Activated CD4-positive, alpha-beta memory T cell treated with anti-CD3 and anti-CD28 coated beads, Interleukin-2, amount 10 ng/mL, durations not matched to agents 7 days and 5 days (primary cell): ENCODE measurements at regions of chr9 and their contacts with region 1.

Region 1: DNA sequence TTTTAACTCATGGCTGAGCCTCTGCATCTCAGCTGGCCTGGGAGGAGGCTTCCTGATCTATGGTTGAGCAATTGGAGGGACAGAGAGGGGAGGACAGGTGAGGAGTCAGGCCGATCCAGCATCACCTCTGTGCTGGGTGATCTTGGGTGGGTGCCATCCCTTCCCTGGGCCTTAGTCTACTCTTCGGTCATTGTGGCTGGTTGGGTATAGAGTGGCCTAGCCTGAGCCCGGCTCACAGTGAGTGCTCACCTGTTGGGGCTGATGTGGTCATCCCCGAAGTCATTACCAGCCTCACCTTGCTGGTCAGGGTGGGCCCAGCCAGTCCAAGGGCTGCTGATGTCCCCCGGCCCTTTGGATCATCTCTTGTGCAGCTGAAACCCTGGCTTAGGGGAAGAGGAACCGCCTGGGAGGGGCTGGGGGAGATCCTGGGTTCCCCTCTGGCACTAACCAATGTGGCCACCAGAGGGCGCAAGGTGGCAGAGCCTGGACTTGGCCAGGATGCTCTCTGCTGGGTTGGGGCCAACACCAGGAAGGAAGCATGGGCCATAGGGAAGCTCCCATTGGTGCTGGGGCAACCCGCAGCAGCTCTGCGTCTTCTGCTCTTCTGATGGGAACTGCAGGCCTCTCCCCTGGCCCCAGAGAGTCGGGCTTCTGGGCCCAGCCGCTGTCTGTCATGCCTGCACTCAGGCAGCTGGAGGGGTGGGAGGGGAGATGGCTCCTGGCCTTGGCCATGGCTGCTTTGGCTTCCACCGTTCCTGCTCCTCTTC is 17.3 kb upstream of the ODF2 start:
- DNase-seq: peak; percentile 85
- H3K4me3 Mint-ChIP-seq: no peak overlapping the region
- H3K27ac Mint-ChIP-seq: no peak overlapping the region
- H3K4me1 Mint-ChIP-seq: peaks cover 11% of the 10 kb centered on the region
- H3K27me3 Mint-ChIP-seq: no peaks in the 10 kb centered on the region

Region 2: GRCh38 chr9:128218518-128219389 is 219.8 kb before region 1 on chr9:
- CTCF ChIA-PET with region 1: no interaction called
- POLR2A ChIA-PET with region 1: no interaction called
- DNase-seq: peak; percentile 97
- H3K4me3 Mint-ChIP-seq: peak overlapping the region; percentile 74
- H3K27ac Mint-ChIP-seq: peak overlapping the region; percentile 51
- H3K4me1 Mint-ChIP-seq: peaks cover 12% of the 10 kb centered on the region
- H3K27me3 Mint-ChIP-seq: peaks cover 11% of the 10 kb centered on the region

Region 3: GRCh38 chr9:128420060-128420650 is 18.4 kb before region 1 on chr9:
- CTCF ChIA-PET with region 1: interaction called, 11 read pairs
- POLR2A ChIA-PET with region 1: interaction called, 3 read pairs
- DNase-seq: peak; percentile 71
- H3K4me3 Mint-ChIP-seq: peak overlapping the region; percentile 59
- H3K27ac Mint-ChIP-seq: no peak overlapping the region
- H3K4me1 Mint-ChIP-seq: peaks cover 23% of the 10 kb centered on the region
- H3K27me3 Mint-ChIP-seq: peaks cover 40% of the 10 kb centered on the region

Region 4: GRCh38 chr9:128448746-128449145 is 10.2 kb after region 1 on chr9:
- CTCF ChIA-PET with region 1: interaction called, 10 read pairs
- POLR2A ChIA-PET with region 1: interaction called, 3 read pairs
- DNase-seq: no peak
- H3K4me3 Mint-ChIP-seq: no peak overlapping the region
- H3K27ac Mint-ChIP-seq: no peak overlapping the region
- H3K4me1 Mint-ChIP-seq: no peaks in the 10 kb centered on the region
- H3K27me3 Mint-ChIP-seq: peaks cover 7% of the 10 kb centered on the region

Region 5: DNA sequence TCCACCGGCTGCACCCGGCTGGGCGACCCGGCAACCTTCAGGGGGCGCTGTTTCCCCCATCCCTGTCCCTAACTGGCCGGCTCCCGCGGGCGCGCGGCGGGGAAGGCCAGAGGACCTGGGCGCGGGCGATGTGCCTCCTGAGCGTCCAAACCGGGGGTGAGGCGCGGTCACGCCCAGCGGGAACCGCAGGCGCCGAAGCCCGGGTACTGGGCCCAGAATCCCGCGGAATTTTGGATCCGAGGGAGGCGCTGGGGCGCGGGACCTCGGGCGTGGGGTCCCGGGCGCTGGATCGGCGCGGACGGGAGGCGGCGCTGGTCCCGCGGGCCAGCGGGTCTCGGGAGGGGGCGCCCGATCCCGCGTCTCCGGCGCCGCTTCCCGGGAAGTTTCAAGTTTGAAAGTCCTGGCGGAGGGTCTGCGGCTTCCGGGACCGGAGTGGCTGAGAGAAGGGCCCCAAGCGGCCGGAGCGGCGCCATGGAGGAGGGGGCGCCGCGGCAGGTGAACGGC is 264.0 kb after region 1 on chr9 and contains the start of gene PKN3:
- CTCF ChIA-PET with region 1: no interaction called
- POLR2A ChIA-PET with region 1: no interaction called
- DNase-seq: peak; percentile 88
- H3K4me3 Mint-ChIP-seq: peak within 1 kb of the TSS; percentile 82
- H3K27ac Mint-ChIP-seq: peak within 1 kb of the TSS; percentile 3
- H3K4me1 Mint-ChIP-seq: peaks cover 13% of the 10 kb centered on the region
- H3K27me3 Mint-ChIP-seq: no peaks in the 10 kb centered on the region
- total RNA-seq, gene PKN3: 5.0 to 5.6 TPM